Natural killer cell (primary cell): ENCODE measurements at regions of chr5 and their contacts with region 1.

Region 1: DNA sequence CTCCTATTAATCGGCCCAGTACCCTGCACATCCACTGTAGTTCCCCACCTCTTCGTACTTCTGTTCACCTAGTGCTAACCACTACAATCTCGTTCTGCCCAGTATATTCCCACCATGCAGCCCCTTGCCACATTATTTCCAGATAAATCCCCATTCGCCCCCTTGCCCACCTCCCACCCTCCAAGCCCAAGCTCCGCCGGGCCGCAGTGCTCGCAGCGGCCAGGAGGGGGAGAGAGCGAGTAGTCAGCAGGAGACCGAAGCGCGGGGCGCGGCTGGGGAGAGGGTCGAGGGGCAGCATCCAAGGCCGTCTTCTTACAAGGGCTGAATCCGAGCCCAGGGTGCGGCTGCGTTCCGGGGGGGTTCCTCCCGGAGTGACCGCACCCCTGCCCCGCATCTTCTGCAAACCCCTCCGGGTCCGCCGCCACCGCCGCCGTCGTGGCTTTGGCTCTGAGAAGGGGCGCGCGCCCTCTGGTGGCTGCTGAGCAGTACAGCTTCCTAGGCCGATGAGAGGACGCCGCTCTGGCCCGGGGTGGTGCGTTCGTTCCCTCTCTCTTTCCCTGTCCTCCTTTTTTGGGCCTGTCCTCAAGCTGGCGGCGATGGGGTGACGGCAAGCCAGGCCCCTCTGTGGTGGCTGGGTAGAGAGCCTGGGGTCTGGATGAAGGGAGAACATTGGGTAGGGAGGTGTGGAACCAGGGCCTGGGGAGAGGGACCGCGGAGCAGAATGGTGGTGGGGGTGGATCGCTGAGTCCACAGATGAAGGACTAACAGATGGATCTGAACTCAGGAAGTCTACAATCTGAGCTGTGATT is 30.0 kb upstream of the PSD2 start:
- DNase-seq: peak; percentile 86 to 91
- ATAC-seq: peak; percentile 86 to 93 (median 88)
- H3K4me3 ChIP-seq: peak overlapping the region; percentile 59
- H3K4me3 Mint-ChIP-seq: peak overlapping the region; percentile 78
- H3K27ac ChIP-seq: peak overlapping the region; percentile 36
- H3K27ac Mint-ChIP-seq: peak overlapping the region; percentile 51 to 92
- H3K4me1 ChIP-seq: peaks cover 25% of the 10 kb centered on the region
- H3K4me1 Mint-ChIP-seq: peaks cover 13 to 26% of the 10 kb centered on the region in 2 donors
- H3K27me3 ChIP-seq: peaks cover 10% of the 10 kb centered on the region
- H3K27me3 Mint-ChIP-seq: peaks cover 0 to 6% of the 10 kb centered on the region in 2 donors
- CTCF ChIP-seq: peak; percentile 100

Region 2: GRCh38 chr5:139574641-139575312 is 190.8 kb before region 1 on chr5:
- intact Hi-C with region 1: loop called (anchors 5 kb)
- DNase-seq: peak in 1 of 2 donors; percentile 75
- ATAC-seq: peak; percentile 56 to 65 (median 56)
- H3K4me3 ChIP-seq: no peak overlapping the region
- H3K4me3 Mint-ChIP-seq: peak overlapping the region; percentile 6
- H3K27ac ChIP-seq: no peak overlapping the region
- H3K27ac Mint-ChIP-seq: peak overlapping the region; percentile 80 to 85
- H3K4me1 ChIP-seq: peaks cover 45% of the 10 kb centered on the region
- H3K4me1 Mint-ChIP-seq: peaks cover 57% of the 10 kb centered on the region in 2 donors
- H3K27me3 ChIP-seq: no peaks in the 10 kb centered on the region
- H3K27me3 Mint-ChIP-seq: no peaks in the 10 kb centered on the region
- CTCF ChIP-seq: peak; percentile 66